Aorta (tissue), 5 donors: ENCODE measurements at regions of chr10 and their contacts with region 1.

Region 1: GRCh38 chr10:28663576-28664313 is 13.6 kb upstream of the BAMBI start:
- DNase-seq: peak; percentile 88 to 89
- ATAC-seq: peak; percentile 94
- H3K4me3 ChIP-seq: no peak overlapping the region
- H3K27ac ChIP-seq: no peak overlapping the region
- H3K4me1 ChIP-seq: no peaks in the 10 kb centered on the region
- H3K27me3 ChIP-seq: no peaks in the 10 kb centered on the region

Region 2: DNA sequence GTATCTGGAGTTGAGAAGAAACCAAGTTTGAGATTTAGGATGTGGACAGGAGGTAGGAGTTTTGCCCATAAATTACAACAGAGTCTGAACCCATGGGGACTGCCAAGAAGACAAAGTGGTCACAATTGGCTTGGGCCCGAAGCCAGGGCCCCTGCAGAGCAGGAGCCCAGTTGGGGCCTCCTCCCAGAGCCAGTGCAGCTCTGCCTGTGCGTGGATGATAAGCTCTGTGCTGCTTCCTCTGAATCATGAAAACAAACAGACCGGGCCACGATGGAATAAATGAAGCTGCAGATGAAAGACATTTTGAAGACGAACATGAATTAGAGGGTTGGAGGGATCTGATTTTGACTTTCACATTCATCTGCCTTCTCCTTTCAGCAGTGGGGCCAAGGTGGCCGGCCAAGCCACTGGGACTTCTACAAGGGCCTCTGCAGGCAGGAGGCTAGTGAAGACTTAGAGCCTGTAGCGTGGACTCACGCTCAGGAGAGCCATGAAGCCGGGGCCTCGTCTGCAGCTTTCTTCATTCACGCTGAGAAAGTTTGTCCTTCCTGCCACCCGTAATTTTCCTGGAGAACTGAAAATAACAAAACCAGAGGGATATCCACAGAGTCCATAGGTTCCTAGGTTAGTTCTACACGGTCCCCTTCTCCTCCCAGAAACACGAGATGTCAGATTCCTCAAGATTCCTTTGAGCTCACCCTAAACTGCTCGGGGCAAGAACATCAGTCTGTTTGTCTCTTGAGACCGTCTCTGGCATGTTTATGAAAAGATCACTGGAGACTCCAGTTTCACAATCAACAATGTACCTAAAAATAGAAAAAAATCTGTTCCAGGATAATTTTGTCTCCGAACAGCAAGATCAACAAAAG is 468.4 kb after region 1 on chr10:
- intact Hi-C with region 1: loop called (anchors 5 kb)
- DNase-seq: no peak
- ATAC-seq: peak; percentile 49
- H3K4me3 ChIP-seq: no peak overlapping the region
- H3K27ac ChIP-seq: no peak overlapping the region
- H3K4me1 ChIP-seq: no peaks in the 10 kb centered on the region
- H3K27me3 ChIP-seq: no peaks in the 10 kb centered on the region

Region 3: DNA sequence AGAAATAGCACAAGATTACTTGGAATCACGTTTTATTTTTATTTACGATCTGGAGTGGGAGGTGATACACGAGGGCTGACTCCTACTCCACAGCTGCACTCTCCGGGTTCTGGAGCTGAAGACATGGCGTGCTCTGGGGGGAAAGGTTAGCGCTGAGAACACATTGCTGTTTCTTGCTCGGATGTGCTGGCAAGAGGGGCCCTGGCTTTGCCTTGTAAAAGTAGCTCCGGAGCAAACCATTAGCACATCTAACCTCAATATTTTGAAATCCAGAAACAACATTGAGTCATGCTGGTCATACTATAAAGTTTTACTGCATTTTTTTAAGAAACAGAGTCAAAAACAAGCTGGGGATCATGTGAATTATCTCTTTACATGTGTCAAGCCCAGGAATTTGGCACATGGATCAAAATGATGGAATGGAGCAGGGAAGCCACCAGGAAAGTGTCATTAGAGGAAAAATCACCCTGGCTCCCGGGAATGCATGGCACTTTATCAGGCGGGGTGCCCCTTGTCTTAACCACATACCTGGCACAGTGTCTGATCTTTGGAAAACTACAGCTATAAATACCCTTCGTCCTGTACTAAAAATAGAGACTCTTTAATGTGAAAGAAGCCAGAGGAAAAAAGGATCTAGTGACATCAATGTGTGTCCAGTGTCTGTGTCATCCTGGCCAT is 593.5 kb after region 1 on chr10:
- intact Hi-C with region 1: loop called in 1 of 2 experiments (anchors 5 kb)
- DNase-seq: peak; percentile 73 to 81
- ATAC-seq: peak; percentile 84
- H3K4me3 ChIP-seq: no peak overlapping the region
- H3K27ac ChIP-seq: no peak overlapping the region
- H3K4me1 ChIP-seq: peaks cover 0 to 3% of the 10 kb centered on the region in 2 donors
- H3K27me3 ChIP-seq: no peaks in the 10 kb centered on the region